CD8-positive, alpha-beta T cell (primary cell): ENCODE measurements at regions of chr16 and their contacts with region 1.

Region 1: DNA sequence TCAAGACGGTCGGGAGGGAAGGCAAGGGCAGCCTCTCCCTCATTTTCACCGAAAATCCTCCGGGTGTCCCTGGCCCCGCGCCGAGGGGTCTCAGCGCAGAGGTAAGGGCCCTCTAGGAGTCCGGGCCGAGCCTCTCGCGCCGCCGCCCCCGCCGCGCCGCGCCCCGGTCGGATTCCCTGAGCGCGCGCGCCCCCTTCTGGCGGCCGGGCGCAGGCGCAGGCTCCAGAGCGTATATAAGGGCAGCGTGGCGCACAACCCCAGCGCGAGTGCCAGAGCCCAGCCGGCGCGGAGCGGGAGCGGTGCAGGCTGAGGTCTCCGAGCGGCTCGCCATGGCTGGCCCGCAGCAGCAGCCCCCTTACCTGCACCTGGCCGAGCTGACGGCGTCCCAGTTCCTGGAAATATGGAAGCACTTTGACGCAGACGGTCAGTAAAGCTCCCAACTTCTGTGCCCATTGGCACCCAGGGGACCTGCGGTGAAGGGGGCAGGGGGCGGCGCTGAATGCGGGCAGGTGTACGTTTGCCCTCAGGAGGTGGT is at the start of gene CALB2:
- DNase-seq: peak; percentile 33 to 76 (median 58)
- ATAC-seq: peak; percentile 87
- H3K4me3 ChIP-seq: no peak within 1 kb of the TSS
- H3K4me3 Mint-ChIP-seq: no peak within 1 kb of the TSS
- H3K27ac ChIP-seq: no peak within 1 kb of the TSS
- H3K27ac Mint-ChIP-seq: no peak within 1 kb of the TSS
- H3K4me1 ChIP-seq: no peaks in the 10 kb centered on the region
- H3K4me1 Mint-ChIP-seq: peaks cover 3% of the 10 kb centered on the region
- H3K27me3 ChIP-seq: peaks cover 2 to 8% of the 10 kb centered on the region in 2 experiments
- H3K27me3 Mint-ChIP-seq: peaks cover 28% of the 10 kb centered on the region
- CTCF ChIP-seq: peak; percentile 95
- total RNA-seq, gene CALB2: not detected

Region 2: DNA sequence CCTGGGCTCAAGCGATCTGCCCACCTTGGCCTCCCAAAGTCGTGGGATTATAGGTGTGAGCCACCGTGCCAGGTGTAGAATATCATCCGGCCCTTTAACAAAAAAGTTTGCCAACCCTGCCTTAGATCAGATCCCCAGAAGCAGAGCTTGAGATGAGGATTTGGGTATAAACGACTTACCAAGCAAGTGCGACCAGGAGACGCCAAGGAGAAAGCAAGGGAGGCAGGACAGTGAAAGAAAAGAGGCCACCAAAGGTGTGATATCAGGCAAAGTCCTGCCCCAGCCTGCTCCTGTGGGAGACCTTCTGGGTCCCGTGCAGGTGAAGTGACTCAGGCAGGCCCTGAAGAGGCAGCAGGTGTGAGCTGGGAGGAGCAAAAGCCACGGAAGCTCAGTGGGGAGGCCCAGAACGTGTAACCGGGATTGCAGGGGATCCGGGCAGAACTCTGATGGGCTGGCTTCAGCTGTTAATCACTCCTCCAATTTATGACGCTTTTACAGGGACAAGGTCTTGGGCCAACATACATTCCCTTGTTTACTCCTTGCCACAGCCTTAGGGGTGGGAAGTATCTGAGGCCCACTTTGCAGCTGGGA is 14.1 kb before region 1 on chr16:
- CTCF ChIA-PET with region 1: interaction called, 10 read pairs
- POLR2A ChIA-PET with region 1: no interaction called
- intact Hi-C with region 1: no loop called
- DNase-seq: no peak
- ATAC-seq: no peak
- H3K4me3 ChIP-seq: no peak overlapping the region
- H3K4me3 Mint-ChIP-seq: no peak overlapping the region
- H3K27ac ChIP-seq: no peak overlapping the region
- H3K27ac Mint-ChIP-seq: no peak overlapping the region
- H3K4me1 ChIP-seq: no peaks in the 10 kb centered on the region
- H3K4me1 Mint-ChIP-seq: no peaks in the 10 kb centered on the region
- H3K27me3 ChIP-seq: no peaks in the 10 kb centered on the region
- H3K27me3 Mint-ChIP-seq: peaks cover 14% of the 10 kb centered on the region
- CTCF ChIP-seq: no peak

Region 3: GRCh38 chr16:71387045-71387871 is 28.7 kb after region 1 on chr16:
- CTCF ChIA-PET with region 1: no interaction called
- POLR2A ChIA-PET with region 1: no interaction called
- intact Hi-C with region 1: no loop called
- DNase-seq: no peak
- ATAC-seq: no peak
- H3K4me3 ChIP-seq: no peak overlapping the region
- H3K4me3 Mint-ChIP-seq: no peak overlapping the region
- H3K27ac ChIP-seq: no peak overlapping the region
- H3K27ac Mint-ChIP-seq: no peak overlapping the region
- H3K4me1 ChIP-seq: no peaks in the 10 kb centered on the region
- H3K4me1 Mint-ChIP-seq: peaks cover 7% of the 10 kb centered on the region
- H3K27me3 ChIP-seq: peaks cover 0 to 3% of the 10 kb centered on the region in 2 experiments
- H3K27me3 Mint-ChIP-seq: peaks cover 28% of the 10 kb centered on the region
- CTCF ChIP-seq: no peak